WTC11 (cell line): ENCODE measurements at regions of chr13 and their contacts with region 1.

Region 1: DNA sequence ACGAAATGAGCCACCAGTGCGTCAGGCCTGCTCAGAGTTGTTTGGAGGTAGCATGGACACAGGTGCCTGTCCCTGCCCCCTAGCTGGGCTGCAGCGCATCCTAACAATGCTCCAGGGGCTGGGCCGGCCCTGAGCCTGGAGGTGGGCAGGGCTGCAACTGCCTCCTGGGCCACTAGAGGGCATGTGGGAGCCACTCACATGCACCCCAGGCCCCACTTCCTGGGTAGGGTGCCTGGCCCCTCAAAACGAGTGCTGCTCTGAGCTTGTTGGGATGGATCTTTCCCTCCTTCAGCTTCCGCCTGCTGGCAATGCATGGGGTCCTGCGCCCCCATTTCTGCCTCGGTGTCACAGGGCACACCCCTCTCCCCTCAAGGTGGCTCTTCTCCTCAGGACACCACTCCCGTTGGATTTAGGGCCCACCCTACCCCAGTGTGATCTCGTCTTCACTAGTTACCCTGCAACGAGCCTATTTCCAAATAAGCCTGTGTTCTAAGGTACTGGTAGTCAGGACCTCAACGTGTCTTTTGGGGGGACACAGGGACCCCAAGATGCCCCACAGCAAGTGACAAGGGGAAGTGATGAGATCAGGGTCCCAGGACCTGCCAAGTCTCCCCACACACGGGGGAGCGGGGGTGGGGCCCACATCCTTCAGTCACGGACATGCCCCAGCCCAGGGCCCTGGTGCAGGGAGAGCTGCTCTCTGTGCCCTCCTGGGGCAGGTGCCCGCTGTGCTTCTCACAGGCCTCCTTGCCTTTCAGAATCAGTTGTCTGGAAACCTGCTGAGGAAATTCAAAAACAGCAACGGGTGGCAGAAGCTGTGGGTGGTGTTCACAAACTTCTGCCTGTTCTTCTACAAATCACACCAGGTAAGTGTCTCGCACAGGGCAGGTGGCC is 131.3 kb downstream of the STK24 start:
- DNase-seq: peak; percentile 90
- ATAC-seq: peak; percentile 88
- H3K4me3 Mint-ChIP-seq: no peak overlapping the region
- H3K27ac Mint-ChIP-seq: peak overlapping the region; percentile 70; the same call in 1 of the 2 replicates
- H3K4me1 Mint-ChIP-seq: peaks cover 21% of the 10 kb centered on the region
- H3K27me3 Mint-ChIP-seq: no peaks in the 10 kb centered on the region
- CTCF ChIP-seq: peak; percentile 97

Region 2: DNA sequence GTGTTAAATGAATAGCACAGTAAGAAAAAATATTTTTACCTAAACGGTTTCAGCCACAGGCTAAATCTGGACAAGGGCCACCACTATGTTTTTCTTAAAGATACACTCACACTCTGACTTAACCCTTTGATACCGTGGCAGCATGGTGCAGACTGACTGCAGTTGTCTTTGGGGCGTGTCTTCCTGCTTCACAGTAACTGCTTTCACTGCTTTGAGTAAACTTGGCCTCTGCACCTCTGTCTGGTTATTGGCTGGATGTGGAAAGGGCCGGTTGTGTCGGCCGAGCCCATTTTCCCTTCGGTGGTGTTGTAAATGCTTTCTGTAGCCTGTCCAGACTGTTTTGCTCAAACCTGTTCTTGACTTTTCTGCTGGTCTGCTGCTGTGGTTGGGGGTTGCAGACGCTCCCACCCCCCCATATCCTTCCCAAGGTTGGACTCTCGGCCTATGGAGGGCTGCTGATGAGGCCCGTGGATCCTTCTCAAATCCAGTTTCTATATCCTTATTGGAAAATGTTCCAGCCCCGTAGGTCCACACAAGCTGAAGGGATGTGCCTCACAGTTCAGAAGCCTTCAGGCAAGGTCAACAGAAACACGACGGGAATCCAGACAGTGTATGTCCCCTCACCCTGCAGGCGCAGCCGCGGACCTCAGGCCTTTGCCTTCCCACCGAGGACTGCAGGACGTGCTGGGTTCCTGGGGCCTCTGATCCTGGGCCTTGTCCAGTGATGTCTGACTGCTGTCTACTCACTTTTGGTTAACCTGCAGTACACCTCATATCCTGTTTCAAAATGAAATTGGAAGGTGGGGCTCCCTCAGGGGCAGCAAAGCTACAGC is 178.3 kb before region 1 on chr13:
- CTCF ChIA-PET with region 1: no interaction called
- POLR2A ChIA-PET with region 1: no interaction called
- DNase-seq: no peak
- ATAC-seq: peak; percentile 64
- H3K4me3 Mint-ChIP-seq: no peak overlapping the region
- H3K27ac Mint-ChIP-seq: peak overlapping the region; percentile 58
- H3K4me1 Mint-ChIP-seq: peaks cover 10% of the 10 kb centered on the region
- H3K27me3 Mint-ChIP-seq: no peaks in the 10 kb centered on the region
- CTCF ChIP-seq: no peak

Region 3: DNA sequence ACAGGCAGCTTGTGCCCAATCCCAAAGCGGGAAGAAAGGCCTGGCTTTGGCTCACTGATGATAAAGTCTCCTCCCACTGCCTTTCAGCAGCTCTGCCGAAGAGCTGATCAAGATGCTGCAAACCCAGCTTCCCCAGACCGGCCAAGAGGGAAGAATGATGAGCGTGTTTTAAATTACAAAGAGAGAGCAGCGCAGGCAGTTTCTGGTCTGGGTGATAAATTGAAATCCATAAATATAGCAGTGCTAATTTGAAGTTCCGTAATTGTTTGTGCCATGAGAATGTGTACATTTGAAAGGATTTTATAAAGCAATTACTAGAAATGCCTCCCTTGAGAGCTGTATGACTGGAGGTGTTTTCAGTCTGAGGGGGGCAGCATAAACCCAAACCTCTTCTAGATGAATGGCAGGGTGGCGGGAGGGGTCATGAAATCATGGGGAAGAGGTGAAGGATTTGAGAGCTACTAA is 40.4 kb before region 1 on chr13:
- CTCF ChIA-PET with region 1: interaction called, 10 read pairs
- POLR2A ChIA-PET with region 1: no interaction called
- DNase-seq: peak; percentile 42
- ATAC-seq: peak; percentile 93
- H3K4me3 Mint-ChIP-seq: no peak overlapping the region
- H3K27ac Mint-ChIP-seq: peak overlapping the region; percentile 38
- H3K4me1 Mint-ChIP-seq: peaks cover 13% of the 10 kb centered on the region
- H3K27me3 Mint-ChIP-seq: no peaks in the 10 kb centered on the region
- CTCF ChIP-seq: no peak

Region 4: DNA sequence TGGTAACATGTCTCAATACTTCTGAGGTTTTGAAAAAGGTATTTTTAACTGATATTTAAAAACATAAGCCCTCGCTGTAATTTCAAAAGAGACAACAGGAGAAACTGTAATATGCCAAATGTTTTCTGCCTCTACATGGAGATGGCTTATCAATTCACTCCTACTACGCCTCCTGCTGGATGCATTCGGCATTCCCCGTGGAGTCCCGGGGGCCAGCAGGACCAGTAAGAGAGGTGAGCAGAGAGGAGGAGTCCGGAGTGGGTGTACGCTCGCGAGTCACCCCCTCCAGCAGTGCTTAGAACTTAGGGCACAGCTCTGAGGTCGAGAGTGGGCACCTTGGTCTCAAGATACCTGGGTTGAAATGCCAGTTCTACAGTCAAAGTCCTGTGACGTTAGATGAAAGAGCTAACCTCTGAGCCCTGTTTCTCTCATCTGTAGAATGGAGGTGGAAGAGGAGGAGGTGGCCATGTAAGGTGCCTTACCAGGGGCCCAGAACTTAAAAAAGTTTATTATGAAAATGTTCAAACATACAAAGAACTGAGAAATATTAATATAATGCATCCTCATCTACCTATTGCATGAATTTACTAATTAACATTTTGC is 21.1 kb after region 1 on chr13:
- CTCF ChIA-PET with region 1: interaction called, 30 read pairs
- POLR2A ChIA-PET with region 1: no interaction called
- DNase-seq: peak; percentile 87
- ATAC-seq: peak; percentile 90
- H3K4me3 Mint-ChIP-seq: no peak overlapping the region
- H3K27ac Mint-ChIP-seq: no peak overlapping the region
- H3K4me1 Mint-ChIP-seq: peaks cover 18% of the 10 kb centered on the region
- H3K27me3 Mint-ChIP-seq: no peaks in the 10 kb centered on the region
- CTCF ChIP-seq: peak; percentile 74

Region 5: DNA sequence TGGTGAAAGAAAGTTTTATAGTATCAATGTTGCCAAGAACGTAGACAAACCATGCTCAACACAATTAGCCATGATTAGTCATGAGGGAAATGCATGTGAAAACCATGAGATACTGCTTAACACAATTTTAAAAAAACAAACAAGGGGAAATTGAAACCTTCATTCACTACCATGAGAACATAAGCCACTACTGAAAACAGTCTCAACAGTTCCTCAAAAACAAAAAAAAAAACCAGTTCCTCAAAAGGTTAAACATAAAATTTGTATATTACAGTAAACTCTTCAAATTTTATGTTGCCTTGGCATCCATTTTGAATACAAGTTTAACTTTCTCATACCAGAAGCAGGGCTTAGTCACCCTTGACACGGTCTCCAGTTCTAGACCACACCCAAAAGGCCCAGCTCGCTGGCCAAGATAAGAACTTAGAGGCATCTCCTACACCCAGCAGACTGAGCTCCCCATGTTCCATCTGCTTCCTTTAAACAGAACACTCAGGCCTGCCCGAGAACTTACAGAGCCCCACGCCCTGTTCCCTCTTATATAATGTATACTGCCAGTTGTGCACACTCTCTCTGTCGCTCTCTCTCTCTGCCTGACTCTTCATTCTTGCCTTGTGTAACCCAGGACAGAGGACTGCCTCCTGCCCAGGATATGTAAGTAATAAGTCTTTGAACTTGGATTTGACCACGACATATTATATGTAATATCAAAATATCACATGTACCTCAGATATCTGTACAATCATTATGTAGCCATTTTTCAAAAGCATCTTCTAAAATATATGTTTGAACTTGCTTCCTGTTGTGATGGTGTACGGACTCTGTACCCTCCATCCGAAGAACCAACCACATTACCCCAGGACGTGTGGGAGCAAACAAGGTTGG is 63.9 kb after region 1 on chr13:
- CTCF ChIA-PET with region 1: interaction called, 10 read pairs
- POLR2A ChIA-PET with region 1: no interaction called
- DNase-seq: no peak
- ATAC-seq: no peak
- H3K4me3 Mint-ChIP-seq: no peak overlapping the region
- H3K27ac Mint-ChIP-seq: peak overlapping the region; percentile 46; the same call in 1 of the 2 replicates
- H3K4me1 Mint-ChIP-seq: peaks cover 65% of the 10 kb centered on the region
- H3K27me3 Mint-ChIP-seq: no peaks in the 10 kb centered on the region
- CTCF ChIP-seq: no peak

Region 6: GRCh38 chr13:98672944-98673545 is 227.5 kb after region 1 on chr13:
- CTCF ChIA-PET with region 1: interaction called, 36 read pairs
- POLR2A ChIA-PET with region 1: no interaction called
- DNase-seq: peak; percentile 68
- ATAC-seq: peak; percentile 80
- H3K4me3 Mint-ChIP-seq: no peak overlapping the region
- H3K27ac Mint-ChIP-seq: no peak overlapping the region
- H3K4me1 Mint-ChIP-seq: peaks cover 34% of the 10 kb centered on the region
- H3K27me3 Mint-ChIP-seq: peaks cover 3% of the 10 kb centered on the region; the same call in 1 of the 2 replicates
- CTCF ChIP-seq: peak; percentile 76